ENCODE measurements at regions of chr6 and their contacts with region 1.

Region 1: DNA sequence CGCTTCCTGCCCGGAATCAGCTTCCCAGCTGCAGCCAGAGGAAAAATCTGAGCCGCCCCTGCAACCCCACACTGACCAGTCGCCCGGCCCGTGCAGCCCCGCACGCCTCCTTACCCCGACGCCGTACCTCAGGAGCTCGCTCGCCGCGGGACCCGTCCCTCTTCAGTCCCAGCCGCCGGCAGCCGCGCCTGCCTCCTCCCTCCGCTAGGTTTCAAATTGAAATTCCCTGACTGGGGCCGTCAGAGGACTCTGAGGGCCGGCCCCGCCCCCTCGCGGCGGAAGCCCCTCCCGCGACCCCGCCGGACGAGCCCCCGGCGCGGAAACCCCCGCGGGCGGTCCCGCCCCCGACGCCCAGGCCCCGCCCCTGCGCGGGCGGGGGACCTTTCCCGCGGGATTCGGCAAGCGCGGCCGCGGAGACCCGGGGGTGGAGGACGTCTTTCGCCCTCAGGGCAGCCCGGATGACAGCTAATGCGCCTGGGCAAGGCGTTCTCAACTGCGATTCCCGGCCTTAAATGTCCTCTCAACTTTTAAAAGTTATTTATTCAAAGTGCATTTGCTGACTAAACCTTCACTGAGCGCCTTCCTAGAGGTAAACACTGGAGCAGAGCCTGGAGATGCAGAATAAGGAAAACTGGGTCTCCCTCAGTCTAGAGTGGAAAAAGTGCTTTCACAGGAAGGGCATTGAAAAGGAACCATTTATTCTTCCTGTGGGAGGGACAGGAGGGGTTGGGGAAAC is at the start of gene EPB41L2:
- DNase-seq: peak; percentile 96
- H3K4me3 ChIP-seq: peak within 1 kb of the TSS; percentile 93
- H3K27ac ChIP-seq: peak within 1 kb of the TSS; percentile 82
- H3K4me1 ChIP-seq: peaks cover 16% of the 10 kb centered on the region
- H3K27me3 ChIP-seq: no peaks in the 10 kb centered on the region
- CTCF ChIP-seq: no peak
- total RNA-seq, gene EPB41L2: 181 and 232 TPM in 2 replicates

Region 2: GRCh38 chr6:130810307-130811030 is 252.7 kb before region 1 on chr6:
- CTCF ChIA-PET with region 1: no interaction called
- POLR2A ChIA-PET with region 1: no interaction called
- intact Hi-C with region 1: no loop called
- DNase-seq: no peak
- H3K4me3 ChIP-seq: no peak overlapping the region
- H3K27ac ChIP-seq: no peak overlapping the region
- H3K4me1 ChIP-seq: no peaks in the 10 kb centered on the region
- H3K27me3 ChIP-seq: no peaks in the 10 kb centered on the region
- CTCF ChIP-seq: no peak

Region 3: DNA sequence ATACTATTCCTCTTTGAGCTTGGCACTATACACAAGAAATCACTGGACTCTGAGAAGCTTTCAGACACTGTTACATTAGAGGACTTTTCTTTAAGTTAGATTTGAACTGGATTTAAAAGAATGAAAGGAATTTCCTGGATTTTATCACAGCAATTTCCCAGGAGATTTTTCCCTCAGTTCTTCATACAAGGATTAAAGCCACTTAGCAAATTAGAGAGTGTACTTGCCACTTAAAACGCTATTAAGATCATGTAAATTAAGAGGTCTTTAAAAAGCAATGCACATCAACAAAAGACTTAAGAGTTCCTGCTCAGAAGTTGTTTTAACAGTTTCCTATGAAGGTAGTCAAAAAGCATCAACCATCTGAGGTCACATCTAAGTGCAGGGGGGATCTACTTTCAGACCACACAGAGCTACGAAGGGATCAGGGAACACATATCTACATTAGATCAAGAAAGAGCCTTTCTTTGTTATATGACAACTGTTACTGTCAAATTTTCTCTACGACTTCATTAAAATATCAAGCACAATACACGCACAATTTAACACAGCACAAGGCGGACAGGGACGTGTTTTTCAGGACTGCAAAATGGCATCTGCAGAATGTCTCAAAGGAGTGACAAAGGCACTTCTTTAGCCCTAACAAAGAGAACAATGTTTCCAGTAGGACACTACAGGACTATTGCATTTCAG is 66.0 kb before region 1 on chr6:
- CTCF ChIA-PET with region 1: no interaction called
- POLR2A ChIA-PET with region 1: no interaction called
- intact Hi-C with region 1: loop called (anchors 5 kb)
- DNase-seq: peak; percentile 96
- H3K4me3 ChIP-seq: peak overlapping the region; percentile 10
- H3K27ac ChIP-seq: peak overlapping the region; percentile 58
- H3K4me1 ChIP-seq: peaks cover 45% of the 10 kb centered on the region
- H3K27me3 ChIP-seq: peaks cover 7% of the 10 kb centered on the region
- CTCF ChIP-seq: no peak

Region 4: DNA sequence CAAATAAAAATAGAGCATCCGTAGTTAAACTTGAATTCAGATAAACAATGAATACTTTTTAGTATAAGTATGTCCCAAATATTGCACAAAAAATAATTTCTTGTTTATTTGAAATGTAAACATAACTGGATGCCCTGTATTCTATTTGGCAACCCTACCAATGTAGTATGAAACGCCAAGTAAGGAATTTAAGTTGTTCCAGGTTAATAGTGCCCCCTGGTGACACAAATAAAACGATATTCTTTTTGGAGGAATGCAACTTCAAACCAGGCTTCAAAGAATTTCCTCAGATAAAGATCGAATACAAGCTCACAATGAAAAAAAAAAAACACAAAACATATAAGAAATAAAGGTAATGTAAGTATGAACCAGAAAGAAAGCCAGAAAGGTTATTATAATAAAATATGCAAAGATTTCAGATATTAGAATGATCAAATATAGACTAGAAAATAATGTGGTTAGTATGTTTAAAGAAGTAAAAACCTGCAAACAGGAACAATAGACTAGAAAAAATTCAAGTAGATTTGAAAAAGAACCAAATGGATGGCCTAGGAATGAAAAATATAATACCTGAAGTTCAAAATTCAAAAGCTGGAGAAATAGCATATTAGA is 53.7 kb after region 1 on chr6:
- CTCF ChIA-PET with region 1: no interaction called
- POLR2A ChIA-PET with region 1: no interaction called
- intact Hi-C with region 1: loop called (anchors 5 kb)
- DNase-seq: peak; percentile 78
- H3K4me3 ChIP-seq: no peak overlapping the region
- H3K27ac ChIP-seq: no peak overlapping the region
- H3K4me1 ChIP-seq: peaks cover 18% of the 10 kb centered on the region
- H3K27me3 ChIP-seq: no peaks in the 10 kb centered on the region
- CTCF ChIP-seq: peak; percentile 64